SK-N-SH (cell line): ENCODE measurements at regions of chr18 and their contacts with region 1.

Region 1: GRCh38 chr18:24543805-24544498 is 83.5 kb downstream of the HRH4 start:
- DNase-seq: peak; percentile 39
- H3K4me3 ChIP-seq: no peak overlapping the region; a peak in 1 of 4 replicates
- H3K27ac ChIP-seq: no peak overlapping the region
- H3K4me1 ChIP-seq: peaks cover 0 to 5% of the 10 kb centered on the region in 2 experiments; a peak in 2 of 4 replicates
- H3K27me3 ChIP-seq: no peaks in the 10 kb centered on the region; the same call in 1 of the 2 replicates
- CTCF ChIP-seq: peak; percentile 52
- EP300 ChIP-seq: no peak
- RAD21 ChIP-seq: peak; percentile 82

Region 2: GRCh38 chr18:24219561-24220317 is 324.2 kb before region 1 on chr18:
- CTCF ChIA-PET with region 1: no interaction called
- POLR2A ChIA-PET with region 1: no interaction called
- DNase-seq: no peak
- H3K4me3 ChIP-seq: no peak overlapping the region
- H3K27ac ChIP-seq: no peak overlapping the region
- H3K4me1 ChIP-seq: peaks cover 0 to 9% of the 10 kb centered on the region in 2 experiments; a peak in 2 of 4 replicates
- H3K27me3 ChIP-seq: no peaks in the 10 kb centered on the region
- CTCF ChIP-seq: no peak
- EP300 ChIP-seq: no peak
- RAD21 ChIP-seq: no peak

Region 3: GRCh38 chr18:24530630-24531111 is 13.3 kb before region 1 on chr18:
- CTCF ChIA-PET with region 1: interaction called, 15 read pairs
- POLR2A ChIA-PET with region 1: no interaction called
- DNase-seq: no peak
- H3K4me3 ChIP-seq: no peak overlapping the region
- H3K27ac ChIP-seq: no peak overlapping the region
- H3K4me1 ChIP-seq: no peaks in the 10 kb centered on the region
- H3K27me3 ChIP-seq: no peaks in the 10 kb centered on the region; the same call in 1 of the 2 replicates
- CTCF ChIP-seq: no peak
- EP300 ChIP-seq: no peak
- RAD21 ChIP-seq: no peak

Region 4: GRCh38 chr18:24582771-24583170 is 38.8 kb after region 1 on chr18:
- CTCF ChIA-PET with region 1: interaction called, 16 read pairs
- POLR2A ChIA-PET with region 1: no interaction called
- DNase-seq: no peak
- H3K4me3 ChIP-seq: no peak overlapping the region
- H3K27ac ChIP-seq: no peak overlapping the region
- H3K4me1 ChIP-seq: peaks cover 0 to 11% of the 10 kb centered on the region in 2 experiments; a peak in 1 of 4 replicates
- H3K27me3 ChIP-seq: no peaks in the 10 kb centered on the region
- CTCF ChIP-seq: no peak
- EP300 ChIP-seq: no peak
- RAD21 ChIP-seq: no peak

Region 5: DNA sequence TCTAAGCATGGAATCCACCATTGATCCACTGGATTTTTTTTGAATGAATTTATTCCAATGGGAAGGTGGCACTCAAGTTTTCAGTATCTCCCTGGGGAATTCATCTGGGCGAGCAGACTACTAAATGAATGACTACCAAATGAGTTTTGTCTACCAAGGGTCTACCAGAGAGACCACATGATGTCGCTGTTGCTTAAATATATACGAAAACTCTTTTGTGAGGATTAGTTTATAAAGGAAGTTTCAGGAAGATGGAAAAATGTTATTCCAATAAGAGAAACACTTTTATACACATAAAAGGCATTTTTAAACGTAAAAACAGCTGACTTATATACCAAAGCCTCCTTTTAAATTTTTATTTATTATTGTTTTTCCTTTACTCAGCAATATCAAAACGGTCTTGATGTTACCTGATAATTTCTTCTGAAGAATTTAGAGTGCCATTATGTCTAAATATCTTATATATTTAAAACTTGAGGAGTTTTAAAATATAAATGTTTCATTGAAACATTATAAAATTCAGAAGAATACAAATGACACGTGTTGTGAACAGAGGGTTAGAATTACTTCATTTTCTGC is 56.2 kb after region 1 on chr18:
- CTCF ChIA-PET with region 1: interaction called, 35 read pairs
- POLR2A ChIA-PET with region 1: no interaction called
- DNase-seq: peak; percentile 56
- H3K4me3 ChIP-seq: no peak overlapping the region
- H3K27ac ChIP-seq: no peak overlapping the region
- H3K4me1 ChIP-seq: no peaks in the 10 kb centered on the region
- H3K27me3 ChIP-seq: no peaks in the 10 kb centered on the region
- CTCF ChIP-seq: peak; percentile 75
- EP300 ChIP-seq: no peak
- RAD21 ChIP-seq: peak; percentile 84